Posterior vena cava (tissue), 2 donors: ENCODE measurements at regions of chr2 and their contacts with region 1.

Region 1: DNA sequence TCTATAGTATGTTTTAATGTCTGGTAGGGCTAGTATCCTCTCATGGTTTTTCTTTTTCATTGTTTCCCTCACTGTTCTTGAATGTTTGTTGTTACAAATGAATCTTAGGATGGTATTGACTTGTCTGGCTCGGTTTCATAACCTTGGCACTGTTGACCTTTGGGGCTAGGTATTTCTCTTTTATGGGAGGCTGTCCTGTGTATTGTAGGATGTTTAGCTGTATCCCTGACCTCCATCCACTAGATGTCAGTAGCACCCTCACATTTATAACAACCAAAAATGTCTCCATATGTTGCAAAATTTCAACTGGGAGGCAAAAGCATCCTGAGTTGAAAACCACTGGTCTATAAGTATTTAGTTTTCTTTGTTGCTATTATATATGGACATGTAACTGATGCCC is 7.0 kb upstream of the AOX1 start:
- DNase-seq: no peak

Region 2: DNA sequence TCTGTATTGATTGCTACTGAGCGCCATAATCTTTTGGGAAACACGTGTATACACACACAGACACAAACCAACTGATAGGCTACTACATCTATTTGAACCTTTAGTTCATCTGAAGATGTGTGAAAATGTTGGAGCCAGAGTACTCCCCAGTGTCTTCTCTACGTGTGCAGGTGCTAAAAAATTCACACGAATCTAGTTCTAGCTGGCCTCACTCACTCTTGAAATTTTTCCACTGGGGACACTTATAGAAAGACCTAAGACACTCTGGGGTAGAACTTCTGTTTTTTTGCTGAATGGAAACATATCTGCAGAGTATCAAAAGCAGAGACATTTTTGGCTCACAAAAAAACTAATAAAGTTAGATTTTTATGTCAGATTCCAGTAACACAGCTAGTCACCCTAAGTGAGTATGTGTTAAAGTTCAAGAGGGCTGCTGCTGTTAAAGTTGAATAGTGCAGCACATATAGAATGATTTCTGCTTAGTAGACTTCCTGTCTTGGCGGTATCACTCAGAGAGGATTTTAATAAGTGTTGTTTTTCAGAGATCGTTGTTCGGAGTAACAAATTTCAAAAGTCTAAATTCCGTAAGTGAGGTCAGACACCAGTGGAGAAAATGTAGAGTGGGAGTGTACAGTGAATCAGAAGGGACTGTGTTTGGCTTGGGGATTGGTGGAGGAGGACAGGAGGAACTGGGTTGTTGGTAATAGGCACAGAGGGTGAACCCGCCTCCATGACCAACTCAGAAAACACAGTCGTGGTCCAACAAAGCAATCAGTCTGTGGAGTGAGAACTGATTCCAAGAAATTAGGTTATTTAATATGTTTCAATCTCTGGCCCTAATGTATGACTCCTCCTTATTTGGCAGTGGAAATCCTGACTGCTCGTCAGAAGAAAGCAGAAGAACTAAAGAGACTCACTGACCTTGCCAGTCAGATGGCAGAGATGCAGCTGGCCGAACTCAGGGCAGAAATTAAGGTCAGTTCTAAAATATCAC is 112.1 kb before region 1 on chr2:
- intact Hi-C with region 1: no loop called
- DNase-seq: no peak

Region 3: DNA sequence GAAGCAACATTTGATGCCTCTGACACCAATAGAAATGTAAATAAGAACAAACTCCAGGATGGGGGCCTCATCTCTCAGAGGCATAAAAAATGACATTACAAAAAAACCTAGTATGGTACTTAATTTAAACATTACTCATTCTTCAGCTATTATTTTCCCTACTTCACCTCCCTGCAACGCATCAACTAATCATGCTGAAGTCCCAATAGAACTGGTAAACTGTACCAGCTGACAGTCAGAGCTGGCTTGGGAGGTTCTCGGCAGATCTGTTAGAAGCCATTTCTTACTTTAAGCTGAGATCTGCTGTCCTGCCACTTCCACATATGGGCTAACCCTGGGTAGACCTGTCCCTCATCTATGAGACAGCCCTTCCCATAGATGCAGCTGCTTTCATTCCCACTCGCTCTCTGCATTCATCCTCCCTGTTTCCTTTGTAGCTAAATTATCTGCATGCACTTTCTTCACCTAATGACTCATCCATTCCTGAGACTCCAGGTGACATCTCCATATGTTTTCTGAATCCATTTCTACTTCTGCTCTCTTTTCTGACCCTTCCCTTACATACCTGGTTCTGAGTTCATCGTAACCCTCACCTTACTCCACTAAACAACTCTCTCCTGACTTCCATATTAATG is 115.2 kb after region 1 on chr2:
- intact Hi-C with region 1: loop called in 1 of 2 experiments (anchors 5 kb)
- DNase-seq: no peak

Region 4: GRCh38 chr2:200703127-200703925 is 124.5 kb after region 1 on chr2:
- intact Hi-C with region 1: loop called (anchors 5 kb)
- DNase-seq: no peak